ENCODE measurements at regions of chr2 and their contacts with region 1.

Region 1: DNA sequence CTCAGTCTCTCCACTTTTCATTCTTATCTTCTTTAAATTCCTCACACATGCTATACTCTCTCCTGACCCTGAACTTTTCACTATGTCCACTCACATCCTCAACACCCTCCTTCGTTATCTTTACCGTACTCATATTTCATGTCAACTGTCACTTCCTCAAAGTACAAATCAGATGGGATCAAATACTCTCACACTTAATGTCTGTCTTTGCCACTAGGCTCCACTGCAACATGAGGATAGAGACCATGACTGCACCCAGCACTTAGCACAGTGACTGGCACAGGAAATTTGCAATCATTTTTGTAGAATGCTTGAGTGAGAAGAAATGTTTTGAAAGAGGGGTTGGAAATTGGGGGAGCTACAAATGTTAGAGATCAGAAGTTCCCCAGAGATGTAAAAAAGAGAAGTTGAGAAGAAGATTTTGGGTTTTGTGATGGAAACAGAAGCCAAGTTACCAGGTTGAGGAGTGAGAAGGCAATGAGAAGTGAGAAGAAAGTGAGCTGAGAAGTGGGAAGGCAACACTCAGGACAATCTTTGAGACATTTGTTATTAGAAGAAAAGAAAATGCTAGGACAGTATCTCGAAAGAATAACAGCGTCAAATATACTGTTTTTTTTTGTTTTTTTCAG is 87.0 kb downstream of the CCDC141 start:
- DNase-seq: peak in 1 of 14 experiments; percentile 9
- ATAC-seq: no peak
- H3K4me3 ChIP-seq: no peak overlapping the region
- H3K4me3 Mint-ChIP-seq: no peak overlapping the region
- H3K27ac ChIP-seq: no peak overlapping the region
- H3K27ac Mint-ChIP-seq: no peak overlapping the region
- H3K4me1 ChIP-seq: no peaks in the 10 kb centered on the region
- H3K4me1 Mint-ChIP-seq: no peaks in the 10 kb centered on the region
- H3K27me3 ChIP-seq: no peaks in the 10 kb centered on the region
- H3K27me3 Mint-ChIP-seq: no peaks in the 10 kb centered on the region
- CTCF ChIP-seq: no peak

Region 2: DNA sequence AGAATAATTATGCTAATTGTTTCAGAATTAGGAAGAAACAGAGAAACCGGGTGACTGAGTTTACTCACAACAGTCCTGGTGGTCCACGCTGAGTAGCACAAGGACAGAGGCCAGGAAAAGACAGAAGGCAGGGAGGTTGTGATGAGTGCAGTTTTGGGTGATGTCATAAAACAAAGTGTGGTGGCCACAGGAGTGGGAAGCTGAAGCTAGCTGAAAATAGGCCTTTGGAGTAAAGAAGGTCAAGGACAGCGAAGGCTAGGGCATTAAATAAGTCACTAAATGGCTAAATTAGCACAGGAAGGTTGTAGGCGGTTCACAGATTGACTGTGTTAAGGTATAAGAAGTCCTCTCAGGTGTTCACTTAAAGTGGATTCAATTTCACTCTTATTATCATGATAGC is 34.8 kb before region 1 on chr2:
- CTCF ChIA-PET with region 1: no interaction called
- POLR2A ChIA-PET with region 1: no interaction called
- intact Hi-C with region 1: loop called in 1 of 2 experiments (anchors 1 kb)
- DNase-seq: no peak
- ATAC-seq: no peak
- H3K4me3 ChIP-seq: no peak overlapping the region
- H3K4me3 Mint-ChIP-seq: no peak overlapping the region
- H3K27ac ChIP-seq: no peak overlapping the region
- H3K27ac Mint-ChIP-seq: no peak overlapping the region
- H3K4me1 ChIP-seq: no peaks in the 10 kb centered on the region
- H3K4me1 Mint-ChIP-seq: no peaks in the 10 kb centered on the region
- H3K27me3 ChIP-seq: no peaks in the 10 kb centered on the region
- H3K27me3 Mint-ChIP-seq: no peaks in the 10 kb centered on the region
- CTCF ChIP-seq: no peak

Region 3: GRCh38 chr2:180307096-180307495 is 1344.2 kb after region 1 on chr2:
- CTCF ChIA-PET with region 1: no interaction called
- POLR2A ChIA-PET with region 1: no interaction called
- intact Hi-C with region 1: no loop called
- DNase-seq: no peak
- ATAC-seq: no peak
- H3K4me3 ChIP-seq: no peak overlapping the region
- H3K4me3 Mint-ChIP-seq: no peak overlapping the region
- H3K27ac ChIP-seq: no peak overlapping the region
- H3K27ac Mint-ChIP-seq: no peak overlapping the region
- H3K4me1 ChIP-seq: no peaks in the 10 kb centered on the region
- H3K4me1 Mint-ChIP-seq: no peaks in the 10 kb centered on the region
- H3K27me3 ChIP-seq: no peaks in the 10 kb centered on the region
- H3K27me3 Mint-ChIP-seq: no peaks in the 10 kb centered on the region
- CTCF ChIP-seq: no peak